B cell (primary cell): ENCODE measurements at regions of chr1 and their contacts with region 1.

Region 1: DNA sequence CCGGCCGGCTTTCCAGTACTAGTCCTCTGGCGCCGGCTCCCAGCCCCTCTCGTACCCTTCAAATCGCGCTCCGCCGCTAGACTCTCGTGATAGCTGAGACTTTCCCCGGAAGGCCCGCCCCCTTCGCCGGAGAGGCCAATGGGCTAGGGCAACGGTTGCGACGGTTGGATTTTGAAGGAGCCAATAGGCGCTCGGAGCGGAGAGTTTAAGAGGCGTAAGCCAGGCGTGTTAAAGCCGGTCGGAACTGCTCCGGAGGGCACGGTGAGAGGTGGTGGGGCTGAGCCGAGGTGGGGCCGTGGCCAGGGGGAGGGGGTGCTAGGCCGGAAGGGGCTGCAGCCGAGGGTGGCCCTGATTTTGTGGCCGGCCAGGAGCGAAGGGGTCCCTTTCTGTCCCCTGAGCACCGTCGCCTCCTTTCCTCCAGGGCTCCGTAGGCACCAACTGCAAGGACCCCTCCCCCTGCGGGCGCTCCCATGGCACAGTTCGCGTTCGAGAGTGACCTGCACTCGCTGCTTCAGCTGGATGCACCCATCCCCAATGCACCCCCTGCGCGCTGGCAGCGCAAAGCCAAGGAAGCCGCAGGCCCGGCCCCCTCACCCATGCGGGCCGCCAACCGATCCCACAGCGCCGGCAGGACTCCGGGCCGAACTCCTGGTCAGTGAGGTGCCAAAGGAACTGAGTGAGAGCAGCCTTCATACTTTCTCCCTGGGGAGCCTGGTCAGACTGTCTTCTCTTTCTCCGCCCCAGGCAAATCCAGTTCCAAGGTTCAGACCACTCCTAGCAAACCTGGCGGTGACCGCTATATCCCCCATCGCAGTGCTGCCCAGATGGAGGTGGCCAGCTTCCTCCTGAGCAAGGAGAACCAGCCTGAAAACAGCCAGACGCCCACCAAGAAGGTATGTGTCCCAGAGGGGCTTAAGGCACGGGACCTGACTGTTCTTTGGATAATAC is at the start of gene CDC20:
- DNase-seq: peak; percentile 95
- ATAC-seq: peak; percentile 99
- H3K4me3 ChIP-seq: peak within 1 kb of the TSS; percentile 69 to 81 (median 73)
- H3K4me3 Mint-ChIP-seq: peak within 1 kb of the TSS; percentile 89
- H3K27ac ChIP-seq: peak within 1 kb of the TSS; percentile 48 to 79
- H3K27ac Mint-ChIP-seq: peak within 1 kb of the TSS; percentile 81
- H3K4me1 ChIP-seq: peaks cover 9 to 15% of the 10 kb centered on the region in 2 donors
- H3K4me1 Mint-ChIP-seq: peaks cover 18% of the 10 kb centered on the region
- H3K27me3 ChIP-seq: no peaks in the 10 kb centered on the region
- H3K27me3 Mint-ChIP-seq: no peaks in the 10 kb centered on the region
- CTCF ChIP-seq: no peak
- total RNA-seq, gene CDC20: 1.1 and 2.1 TPM in 2 replicates

Region 2: GRCh38 chr1:42846257-42847110 is 512.5 kb before region 1 on chr1 and contains the start of gene ZNF691:
- CTCF ChIA-PET with region 1: no interaction called
- POLR2A ChIA-PET with region 1: no interaction called
- intact Hi-C with region 1: loop called (anchors 5 kb)
- DNase-seq: peak; percentile 93
- ATAC-seq: peak; percentile 98
- H3K4me3 ChIP-seq: peak within 1 kb of the TSS; percentile 80 to 92 (median 90)
- H3K4me3 Mint-ChIP-seq: peak within 1 kb of the TSS; percentile 95
- H3K27ac ChIP-seq: peak within 1 kb of the TSS; percentile 41 to 76
- H3K27ac Mint-ChIP-seq: peak within 1 kb of the TSS; percentile 91
- H3K4me1 ChIP-seq: peaks cover 17 to 24% of the 10 kb centered on the region in 2 donors
- H3K4me1 Mint-ChIP-seq: peaks cover 46% of the 10 kb centered on the region
- H3K27me3 ChIP-seq: no peaks in the 10 kb centered on the region
- H3K27me3 Mint-ChIP-seq: no peaks in the 10 kb centered on the region
- CTCF ChIP-seq: peak; percentile 16
- total RNA-seq, gene ZNF691: 17.1 and 18.4 TPM in 2 replicates

Region 3: GRCh38 chr1:43389326-43390313 is 30.6 kb after region 1 on chr1 and contains the starts of genes MED8 and SZT2:
- CTCF ChIA-PET with region 1: no interaction called
- POLR2A ChIA-PET with region 1: interaction called, 10 read pairs
- intact Hi-C with region 1: loop called (anchors 1 kb)
- DNase-seq: peak; percentile 95
- ATAC-seq: peak; percentile 96
- H3K4me3 ChIP-seq: peak within 1 kb of the TSS; percentile 82 to 96 (median 92)
- H3K4me3 Mint-ChIP-seq: peak within 1 kb of the TSS; percentile 100
- H3K27ac ChIP-seq: peak within 1 kb of the TSS; percentile 63 to 87
- H3K27ac Mint-ChIP-seq: peak within 1 kb of the TSS; percentile 98
- H3K4me1 ChIP-seq: peaks cover 20 to 24% of the 10 kb centered on the region in 2 donors
- H3K4me1 Mint-ChIP-seq: peaks cover 41% of the 10 kb centered on the region
- H3K27me3 ChIP-seq: no peaks in the 10 kb centered on the region
- H3K27me3 Mint-ChIP-seq: no peaks in the 10 kb centered on the region
- CTCF ChIP-seq: no peak
- total RNA-seq, gene MED8: 30.0 and 31.8 TPM in 2 replicates
- total RNA-seq, gene SZT2: 193 and 197 TPM in 2 replicates

Region 4: DNA sequence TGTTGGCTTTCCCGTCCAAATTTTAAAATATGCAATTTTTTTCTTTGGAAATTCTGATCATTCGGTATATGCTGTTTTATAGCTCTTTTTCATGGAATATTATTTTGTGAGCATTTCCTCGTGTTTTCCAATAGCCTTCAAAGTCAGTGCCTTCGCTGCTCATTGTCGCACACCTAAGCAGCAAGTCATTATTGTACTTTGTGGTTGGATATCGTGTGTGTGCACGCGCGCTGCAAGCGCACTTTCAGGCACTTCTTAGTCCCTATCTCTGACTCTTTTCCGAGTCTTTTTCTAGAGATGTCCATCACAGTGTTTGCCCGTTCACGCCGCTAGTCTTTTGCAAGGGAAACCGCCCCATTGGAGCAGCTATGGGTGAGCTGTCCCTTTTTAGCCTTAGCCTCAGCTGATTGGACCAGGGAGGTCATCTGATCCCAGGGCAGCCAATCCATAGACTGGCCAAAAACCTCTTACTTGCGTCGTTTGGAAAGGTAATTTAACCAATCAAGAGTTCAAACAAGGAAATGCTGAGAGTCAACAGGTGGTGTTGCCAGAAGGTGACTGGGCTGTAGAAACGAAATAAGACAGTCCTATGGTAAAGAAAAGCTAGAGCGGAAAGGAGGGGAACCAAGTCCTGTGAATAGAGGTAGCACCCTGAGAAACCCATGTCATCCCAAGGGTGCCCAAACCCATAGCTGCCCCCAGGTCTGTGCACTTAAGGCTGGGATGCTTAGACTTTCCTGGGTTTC is 95.4 kb after region 1 on chr1:
- CTCF ChIA-PET with region 1: no interaction called
- POLR2A ChIA-PET with region 1: no interaction called
- intact Hi-C with region 1: loop called (anchors 2 kb)
- DNase-seq: peak; percentile 72
- ATAC-seq: peak; percentile 76
- H3K4me3 ChIP-seq: peak overlapping the region; percentile 54 to 83 (median 72)
- H3K4me3 Mint-ChIP-seq: peak overlapping the region; percentile 97
- H3K27ac ChIP-seq: no peak overlapping the region
- H3K27ac Mint-ChIP-seq: peak overlapping the region; percentile 92
- H3K4me1 ChIP-seq: peaks cover 8 to 9% of the 10 kb centered on the region in 2 donors
- H3K4me1 Mint-ChIP-seq: peaks cover 21% of the 10 kb centered on the region
- H3K27me3 ChIP-seq: peaks cover 0 to 12% (median 9%) of the 10 kb centered on the region in 4 experiments
- H3K27me3 Mint-ChIP-seq: peaks cover 21% of the 10 kb centered on the region
- CTCF ChIP-seq: no peak